Right lobe of liver (tissue), 6 donors: ENCODE measurements at regions of chr2 and their contacts with region 1.

Region 1: GRCh38 chr2:10835052-10835970 is 22.7 kb upstream of the PDIA6 start:
- DNase-seq: peak; percentile 69 to 79 (median 77)
- ATAC-seq: peak; percentile 67 to 79 (median 76)
- H3K4me3 ChIP-seq: no peak overlapping the region
- H3K27ac ChIP-seq: no peak overlapping the region
- H3K4me1 ChIP-seq: peaks cover 0 to 7% (median 5%) of the 10 kb centered on the region in 4 donors
- H3K27me3 ChIP-seq: no peaks in the 10 kb centered on the region
- CTCF ChIP-seq: peak; percentile 75 to 88 (median 82)
- POLR2A ChIP-seq: no peak

Region 2: DNA sequence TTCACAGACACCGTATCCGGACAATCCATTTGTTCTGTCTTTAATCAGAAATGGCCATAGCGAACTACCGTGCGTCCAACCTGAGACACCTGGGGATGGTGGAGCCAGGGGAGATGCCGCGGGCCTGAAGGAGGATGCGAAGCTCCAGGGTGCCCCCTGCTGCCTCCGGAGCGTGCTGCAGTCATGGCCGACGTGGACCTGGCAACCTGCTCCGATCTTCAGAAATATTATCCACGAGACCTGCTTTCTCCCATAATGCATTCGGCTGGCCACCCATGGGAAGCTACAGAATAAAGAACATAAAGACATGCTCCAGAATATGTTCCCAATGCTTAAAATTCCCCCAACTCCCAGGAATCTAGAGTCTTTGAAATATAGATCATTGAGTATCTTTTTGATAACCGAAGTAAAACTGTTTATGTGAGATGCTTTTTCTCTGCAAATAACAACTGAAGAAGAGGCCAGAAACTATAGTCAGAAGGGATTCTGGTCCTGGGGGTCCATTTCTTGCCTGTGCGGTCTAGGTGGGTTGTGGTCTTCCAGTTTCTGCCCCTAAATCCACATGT is 289.3 kb after region 1 on chr2:
- intact Hi-C with region 1: loop called (anchors 5 kb)
- DNase-seq: peak; percentile 64 to 68 (median 65)
- ATAC-seq: peak; percentile 84 to 92 (median 90)
- H3K4me3 ChIP-seq: no peak overlapping the region
- H3K27ac ChIP-seq: no peak overlapping the region
- H3K4me1 ChIP-seq: peaks cover 0 to 2% (median 0%) of the 10 kb centered on the region in 4 donors
- H3K27me3 ChIP-seq: no peaks in the 10 kb centered on the region
- CTCF ChIP-seq: peak; percentile 70 to 83 (median 80)
- POLR2A ChIP-seq: no peak

Region 3: DNA sequence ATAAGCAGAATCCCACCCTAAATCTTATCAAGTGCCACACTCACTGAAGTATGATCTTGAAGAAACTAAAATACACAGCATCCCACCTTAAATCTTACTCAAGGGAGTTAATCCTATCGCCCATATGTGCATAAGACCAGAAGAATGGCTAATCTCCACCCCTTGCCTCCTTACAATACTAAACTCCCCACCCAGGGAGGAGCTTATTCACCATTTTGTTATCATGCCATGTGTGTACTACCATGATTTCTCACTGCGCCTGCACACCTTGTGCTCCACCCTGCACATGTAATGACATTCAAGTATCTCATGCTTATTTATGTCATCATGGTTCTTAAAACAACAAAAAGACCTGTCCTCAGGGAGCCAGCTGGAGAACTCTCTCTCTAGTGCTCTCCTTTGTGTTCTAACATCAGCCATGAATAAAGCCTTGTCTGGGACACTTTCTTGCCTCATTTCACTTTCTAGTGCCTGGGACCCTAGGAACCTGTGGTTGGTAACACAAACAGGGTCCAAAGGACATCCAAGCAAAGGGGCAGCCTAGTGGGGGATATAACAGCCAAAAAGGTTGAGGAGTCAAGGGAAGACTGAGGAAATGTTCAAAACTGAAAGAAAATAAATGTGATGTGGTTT is 407.3 kb after region 1 on chr2:
- intact Hi-C with region 1: no loop called
- DNase-seq: no peak
- ATAC-seq: no peak
- H3K4me3 ChIP-seq: no peak overlapping the region
- H3K27ac ChIP-seq: no peak overlapping the region
- H3K4me1 ChIP-seq: peaks cover 0 to 10% (median 4%) of the 10 kb centered on the region in 4 donors
- H3K27me3 ChIP-seq: no peaks in the 10 kb centered on the region
- CTCF ChIP-seq: no peak
- POLR2A ChIP-seq: no peak